Ascending aorta (tissue), 2 donors: ENCODE measurements at regions of chr10 and their contacts with region 1.

Region 1: DNA sequence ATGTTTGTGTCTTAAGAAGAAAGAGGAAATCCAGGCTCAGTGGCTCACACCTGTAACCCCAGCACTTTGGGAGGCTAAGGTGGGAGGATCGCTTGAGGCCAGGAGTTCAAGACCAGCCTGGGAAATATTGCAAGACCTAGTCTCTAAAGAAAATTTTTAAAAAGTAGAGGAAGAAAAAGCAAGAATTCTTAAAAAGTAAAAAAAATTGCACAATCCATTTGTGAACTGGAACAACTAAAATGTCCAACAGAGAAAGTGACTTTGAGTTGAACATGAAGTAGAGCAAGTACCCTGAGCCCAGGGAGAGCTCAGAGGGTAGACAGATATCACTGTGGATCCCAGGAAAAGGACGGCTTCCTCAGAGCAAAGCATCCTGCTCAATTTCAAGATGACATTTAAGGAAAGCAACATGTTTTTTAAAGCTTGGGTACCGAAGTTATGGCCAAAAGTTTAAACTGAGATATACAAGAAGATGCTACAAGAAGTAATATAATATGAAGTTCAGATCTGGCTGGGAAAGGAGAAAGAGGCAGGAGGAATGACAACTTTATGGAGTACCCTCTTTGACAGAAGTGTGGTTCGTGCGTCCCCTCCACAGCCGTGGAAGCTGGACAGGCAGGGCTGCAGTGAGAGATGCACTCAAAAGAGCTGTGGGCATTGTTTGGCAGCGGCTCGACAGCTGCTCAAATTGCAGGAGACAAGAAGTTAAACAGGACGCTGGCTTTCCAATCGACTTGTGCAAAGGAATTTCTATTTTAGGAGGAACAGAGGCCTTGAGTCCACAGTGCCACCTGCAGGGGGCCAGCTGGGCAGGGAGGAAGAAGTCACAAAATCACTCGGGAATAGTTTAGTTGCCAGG is 201.3 kb downstream of the JCAD start:
- DNase-seq: peak in 1 of 2 donors; percentile 91
- H3K4me3 ChIP-seq: peak overlapping the region in 1 of 2 donors; percentile 15
- H3K27ac ChIP-seq: peak overlapping the region; percentile 66 to 68
- H3K4me1 ChIP-seq: peaks cover 9 to 16% of the 10 kb centered on the region in 2 donors
- H3K27me3 ChIP-seq: no peaks in the 10 kb centered on the region
- CTCF ChIP-seq: peak; percentile 65 to 84 (median 81)

Region 2: DNA sequence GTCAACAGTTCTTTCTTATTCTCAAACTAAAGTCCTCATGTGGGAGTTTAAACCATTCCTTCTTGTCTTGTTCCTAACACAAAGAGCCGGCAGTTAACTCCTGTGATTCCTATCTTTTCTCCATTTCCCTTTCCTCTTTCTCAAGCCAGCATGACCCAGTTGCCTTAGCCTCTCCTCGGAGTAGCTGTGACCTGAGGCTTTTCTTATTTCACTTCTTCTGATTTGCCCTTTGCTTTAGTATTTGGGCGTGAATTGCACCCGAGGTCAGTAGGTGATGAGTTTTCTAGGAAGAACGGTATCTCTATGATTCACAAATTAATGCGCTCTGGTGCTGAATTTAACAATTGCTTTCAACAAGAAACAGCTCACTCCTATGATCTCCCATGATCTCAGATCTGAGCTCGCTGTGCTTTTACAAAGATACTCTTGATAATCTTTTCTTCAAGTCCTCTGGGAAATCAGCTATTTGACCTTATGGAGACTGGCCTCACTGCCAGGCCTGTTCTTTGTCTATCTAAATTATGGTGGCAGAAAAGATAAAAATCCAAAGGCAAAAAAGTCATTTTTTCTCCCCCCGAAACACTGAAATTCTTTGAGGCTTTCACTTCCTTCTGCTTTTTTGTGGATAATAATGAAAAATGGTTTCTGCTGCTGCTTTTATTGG is 16.7 kb after region 1 on chr10:
- intact Hi-C with region 1: loop called (anchors 1 kb)
- DNase-seq: no peak
- H3K4me3 ChIP-seq: no peak overlapping the region
- H3K27ac ChIP-seq: peak overlapping the region; percentile 95 to 98
- H3K4me1 ChIP-seq: peaks cover 16 to 46% of the 10 kb centered on the region in 2 donors
- H3K27me3 ChIP-seq: no peaks in the 10 kb centered on the region
- CTCF ChIP-seq: no peak